Heart left ventricle (tissue), 16 donors: ENCODE measurements at regions of chr10 and their contacts with region 1.

Region 1: DNA sequence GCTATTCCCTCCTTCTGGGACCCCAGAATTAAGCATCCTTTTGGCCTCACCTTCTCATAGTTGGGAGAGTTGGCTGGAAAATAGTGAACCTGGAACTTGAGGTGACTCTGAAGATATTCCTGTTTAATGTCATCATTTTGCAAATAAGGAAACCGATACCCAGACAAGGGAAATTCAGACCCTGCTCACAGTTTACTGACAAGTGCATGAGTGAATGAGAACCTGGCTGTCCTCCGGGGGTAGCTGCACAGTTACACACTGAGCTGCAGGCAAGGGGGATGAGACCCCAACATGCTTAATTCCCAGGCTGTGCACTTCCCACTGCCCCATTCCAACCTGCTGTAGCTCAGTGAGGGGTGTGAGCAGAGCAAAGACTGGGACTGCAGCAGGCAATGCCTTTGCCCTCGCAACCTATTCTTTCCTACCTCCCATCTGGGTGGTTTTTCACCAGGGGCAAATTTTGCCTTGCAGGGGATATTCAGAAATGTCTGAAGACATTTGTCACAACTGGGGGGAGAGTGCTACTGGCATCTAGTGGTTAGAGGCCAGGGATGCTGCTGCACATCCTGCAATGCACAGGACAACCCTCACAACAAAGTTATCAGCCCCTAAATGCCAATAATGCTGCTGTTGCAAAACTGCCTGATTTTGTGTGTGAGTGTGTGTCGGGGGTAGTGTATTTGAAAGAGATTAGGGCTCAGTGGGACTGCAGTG is 136.2 kb downstream of the SORCS3 start:
- DNase-seq: no peak
- ATAC-seq: peak in 2 of 4 donors; percentile 32 to 47
- H3K4me3 ChIP-seq: no peak overlapping the region
- H3K27ac ChIP-seq: no peak overlapping the region
- H3K4me1 ChIP-seq: no peaks in the 10 kb centered on the region
- H3K27me3 ChIP-seq: peaks cover 0 to 8% (median 0%) of the 10 kb centered on the region in 9 donors
- CTCF ChIP-seq: peak in 10 of 12 donors; percentile 14 to 48 (median 30)
- POLR2A ChIP-seq: no peak

Region 2: DNA sequence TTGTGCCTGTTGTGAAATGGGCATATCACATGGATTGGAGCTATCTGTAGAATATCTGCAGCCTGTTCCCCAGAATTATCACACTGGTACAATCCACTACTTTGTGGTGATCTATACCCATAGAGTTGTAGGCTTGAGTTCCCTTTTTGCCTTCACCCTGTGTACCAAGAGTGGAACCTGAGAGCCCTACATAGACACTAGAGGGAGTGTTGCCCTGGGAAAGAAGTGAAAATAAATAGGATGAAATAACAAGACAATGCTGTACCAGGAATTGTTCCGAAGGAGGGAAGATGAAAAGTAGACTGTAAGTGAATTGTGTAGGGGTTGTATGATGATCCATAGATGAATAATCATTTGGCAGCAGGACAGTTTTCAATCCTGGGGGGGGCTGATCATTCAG is 127.2 kb before region 1 on chr10:
- intact Hi-C with region 1: loop called in 9 of 10 experiments (anchors 2 to 10 kb)
- DNase-seq: no peak
- ATAC-seq: peak in 3 of 4 donors; percentile 55 to 64 (median 64)
- H3K4me3 ChIP-seq: no peak overlapping the region
- H3K27ac ChIP-seq: no peak overlapping the region
- H3K4me1 ChIP-seq: no peaks in the 10 kb centered on the region
- H3K27me3 ChIP-seq: peaks cover 0 to 28% (median 2%) of the 10 kb centered on the region in 9 donors
- CTCF ChIP-seq: peak in 11 of 12 donors; percentile 14 to 53 (median 37)
- POLR2A ChIP-seq: no peak